Aorta (tissue), 5 donors: ENCODE measurements at regions of chr3 and their contacts with region 1.

Region 1: DNA sequence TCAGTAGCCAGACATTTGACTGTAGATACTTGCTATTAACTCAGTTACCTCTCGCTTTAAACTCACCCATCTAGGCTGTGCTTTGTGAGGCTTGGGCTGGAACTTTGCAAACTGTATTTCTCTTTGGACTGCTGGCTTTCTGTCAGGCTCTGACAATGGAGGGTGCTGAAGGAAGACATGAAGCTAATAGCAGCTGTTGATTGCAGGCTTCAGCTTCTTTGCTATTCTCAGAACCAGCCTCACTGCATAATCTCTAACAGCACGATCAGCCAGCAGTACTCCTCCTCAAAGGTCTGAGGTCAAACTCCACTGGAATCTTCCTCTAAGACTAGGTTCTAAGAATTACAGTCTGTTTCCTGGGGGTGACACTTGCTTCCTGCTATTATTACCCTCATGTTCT is 295.6 kb downstream of the ZBBX start:
- DNase-seq: no peak
- ATAC-seq: no peak
- H3K4me3 ChIP-seq: no peak overlapping the region
- H3K27ac ChIP-seq: no peak overlapping the region
- H3K4me1 ChIP-seq: no peaks in the 10 kb centered on the region
- H3K27me3 ChIP-seq: no peaks in the 10 kb centered on the region

Region 2: DNA sequence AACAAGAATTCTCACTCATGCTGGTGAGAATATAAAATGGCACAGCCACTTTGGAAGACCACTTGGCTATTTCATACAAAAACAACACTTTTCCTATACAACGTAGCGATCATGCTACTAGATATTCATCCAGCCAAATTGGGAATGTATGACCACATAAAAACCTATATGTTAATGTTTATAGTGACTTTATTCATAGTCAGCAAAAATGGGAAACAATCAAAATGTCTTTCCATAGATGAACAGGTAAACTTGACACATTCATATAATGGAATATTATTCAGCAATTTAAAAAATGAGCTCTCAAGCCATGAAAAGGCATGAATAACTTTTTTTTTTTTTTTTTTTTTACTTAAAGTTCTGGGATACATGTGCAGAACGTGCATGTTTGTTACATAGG is 149.7 kb before region 1 on chr3:
- intact Hi-C with region 1: loop called in 1 of 2 experiments (anchors 10 kb)
- DNase-seq: no peak
- ATAC-seq: no peak
- H3K4me3 ChIP-seq: no peak overlapping the region
- H3K27ac ChIP-seq: no peak overlapping the region
- H3K4me1 ChIP-seq: no peaks in the 10 kb centered on the region
- H3K27me3 ChIP-seq: no peaks in the 10 kb centered on the region

Region 3: GRCh38 chr3:167030082-167030725 is 54.3 kb before region 1 on chr3:
- intact Hi-C with region 1: no loop called
- DNase-seq: no peak
- ATAC-seq: no peak
- H3K4me3 ChIP-seq: no peak overlapping the region
- H3K27ac ChIP-seq: no peak overlapping the region
- H3K4me1 ChIP-seq: no peaks in the 10 kb centered on the region
- H3K27me3 ChIP-seq: no peaks in the 10 kb centered on the region

Region 4: GRCh38 chr3:167051421-167051820 is 33.1 kb before region 1 on chr3:
- intact Hi-C with region 1: no loop called
- DNase-seq: no peak
- ATAC-seq: no peak
- H3K4me3 ChIP-seq: no peak overlapping the region
- H3K27ac ChIP-seq: no peak overlapping the region
- H3K4me1 ChIP-seq: no peaks in the 10 kb centered on the region
- H3K27me3 ChIP-seq: no peaks in the 10 kb centered on the region

Region 5: GRCh38 chr3:167110901-167111300 is 26.4 kb after region 1 on chr3:
- intact Hi-C with region 1: no loop called
- DNase-seq: no peak
- ATAC-seq: no peak
- H3K4me3 ChIP-seq: no peak overlapping the region
- H3K27ac ChIP-seq: no peak overlapping the region
- H3K4me1 ChIP-seq: peaks cover 0 to 2% of the 10 kb centered on the region in 2 donors
- H3K27me3 ChIP-seq: no peaks in the 10 kb centered on the region